Dorsolateral prefrontal cortex (tissue), 120 donors: ENCODE measurements at regions of chr22 and their contacts with region 1.

Region 1: DNA sequence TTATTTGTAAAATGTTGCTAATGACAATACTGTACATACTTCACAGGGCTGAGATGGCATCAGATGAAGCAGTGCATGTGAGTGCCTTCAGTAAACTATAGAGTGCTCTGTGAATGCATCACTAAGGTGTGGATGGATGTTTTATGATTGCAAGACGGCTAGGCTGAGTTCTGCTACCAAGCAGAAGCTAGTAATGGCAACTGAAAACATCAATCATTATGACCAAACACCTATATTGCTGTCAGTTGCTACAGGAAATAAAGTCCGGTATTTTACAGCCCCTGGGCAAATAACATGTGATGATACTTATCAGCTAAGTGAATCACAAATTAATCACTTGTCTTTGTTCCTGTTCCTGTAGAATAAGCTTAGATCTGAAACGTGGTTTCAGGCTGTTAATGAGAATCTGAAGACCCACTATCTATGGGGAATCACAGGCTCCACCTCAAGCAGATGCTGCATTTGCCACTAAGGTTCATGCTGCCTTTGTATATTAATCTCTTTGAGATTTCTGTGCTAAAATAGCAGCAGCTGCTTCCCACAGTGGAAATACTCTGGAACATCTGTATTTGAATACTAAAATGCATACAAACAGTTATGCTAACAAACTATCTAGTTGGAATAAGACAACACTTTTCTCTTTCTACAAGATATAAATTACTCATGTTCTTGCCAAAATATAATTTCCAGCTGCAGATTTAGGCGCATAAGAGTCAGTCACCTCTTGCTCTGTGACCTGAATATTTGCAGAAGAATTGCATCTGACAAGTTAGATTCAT is 254.0 kb upstream of the PITPNB start:
- DNase-seq: no peak
- H3K4me3 ChIP-seq: no peak overlapping the region
- H3K27ac ChIP-seq: no peak overlapping the region
- H3K27me3 ChIP-seq: no peaks in the 10 kb centered on the region
- CTCF ChIP-seq: no peak

Region 2: DNA sequence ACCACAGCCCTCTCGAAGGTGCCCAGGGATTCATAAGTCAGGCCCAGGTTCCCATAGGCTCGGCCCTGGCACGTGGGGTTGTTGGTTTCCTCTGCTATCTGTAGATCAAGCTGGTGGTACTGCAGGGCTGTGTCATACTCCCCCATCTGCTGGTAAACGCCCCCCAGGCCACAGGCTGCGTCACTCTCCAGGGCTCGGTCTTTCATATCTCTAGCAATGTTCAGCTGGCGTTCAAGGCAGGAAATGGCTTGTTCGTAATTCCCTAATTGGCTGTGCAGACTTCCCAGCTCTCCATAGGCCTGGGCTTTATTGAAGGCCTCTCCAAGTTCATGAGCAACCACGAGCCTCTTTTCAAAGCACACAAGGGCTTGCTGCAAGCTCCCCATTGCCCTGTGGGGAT is 67.7 kb before region 1 on chr22:
- intact Hi-C with region 1: loop called in 1 of 2 experiments (anchors 10 kb)
- DNase-seq: no peak
- H3K4me3 ChIP-seq: no peak overlapping the region
- H3K27ac ChIP-seq: no peak overlapping the region
- H3K27me3 ChIP-seq: no peaks in the 10 kb centered on the region
- CTCF ChIP-seq: no peak

Region 3: DNA sequence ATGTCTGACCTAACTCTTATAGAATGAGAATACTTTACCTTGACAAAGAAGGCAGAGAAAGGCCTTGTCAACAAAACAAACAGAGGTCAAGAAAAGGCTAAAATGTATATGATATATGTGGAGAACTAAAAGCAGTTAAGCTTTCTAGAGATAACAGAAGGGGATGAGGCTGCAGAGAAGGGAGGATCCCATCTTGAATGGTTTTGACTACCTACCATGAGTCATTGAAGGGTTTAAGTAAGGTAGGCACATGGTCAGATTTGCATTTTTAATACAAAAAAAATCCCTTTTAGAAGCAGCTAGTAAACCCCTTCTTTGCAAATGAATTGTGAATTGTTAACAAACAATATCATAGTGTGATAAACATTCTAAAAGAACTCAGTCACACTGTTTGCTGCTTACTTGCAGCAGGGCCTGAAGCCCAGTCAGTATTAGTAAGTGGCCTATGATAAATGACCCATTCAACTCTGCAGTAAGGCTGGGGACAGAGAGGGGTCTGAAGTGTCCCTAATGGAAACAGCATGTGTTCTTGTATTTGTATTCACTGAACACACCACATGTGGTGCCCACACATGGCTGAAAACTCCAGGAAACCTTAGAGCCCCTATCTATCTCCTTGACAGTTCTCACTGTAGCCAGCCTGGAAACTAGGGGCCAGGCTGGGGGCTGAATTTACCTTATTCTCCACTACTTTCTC is 74.7 kb after region 1 on chr22:
- intact Hi-C with region 1: no loop called
- DNase-seq: peak in 2 of 10 donors; percentile 37 to 39
- H3K4me3 ChIP-seq: no peak overlapping the region
- H3K27ac ChIP-seq: peak overlapping the region in 22 of 59 donors; percentile 8 to 70 (median 46)
- H3K27me3 ChIP-seq: no peaks in the 10 kb centered on the region
- CTCF ChIP-seq: peak in 3 of 56 donors; percentile 6 to 30 (median 13)